Activated CD4-positive, alpha-beta T cell treated with anti-CD3 and anti-CD28 coated beads for 36 hours (primary cell): ENCODE measurements at regions of chr19 and their contacts with region 1.

Region 1: DNA sequence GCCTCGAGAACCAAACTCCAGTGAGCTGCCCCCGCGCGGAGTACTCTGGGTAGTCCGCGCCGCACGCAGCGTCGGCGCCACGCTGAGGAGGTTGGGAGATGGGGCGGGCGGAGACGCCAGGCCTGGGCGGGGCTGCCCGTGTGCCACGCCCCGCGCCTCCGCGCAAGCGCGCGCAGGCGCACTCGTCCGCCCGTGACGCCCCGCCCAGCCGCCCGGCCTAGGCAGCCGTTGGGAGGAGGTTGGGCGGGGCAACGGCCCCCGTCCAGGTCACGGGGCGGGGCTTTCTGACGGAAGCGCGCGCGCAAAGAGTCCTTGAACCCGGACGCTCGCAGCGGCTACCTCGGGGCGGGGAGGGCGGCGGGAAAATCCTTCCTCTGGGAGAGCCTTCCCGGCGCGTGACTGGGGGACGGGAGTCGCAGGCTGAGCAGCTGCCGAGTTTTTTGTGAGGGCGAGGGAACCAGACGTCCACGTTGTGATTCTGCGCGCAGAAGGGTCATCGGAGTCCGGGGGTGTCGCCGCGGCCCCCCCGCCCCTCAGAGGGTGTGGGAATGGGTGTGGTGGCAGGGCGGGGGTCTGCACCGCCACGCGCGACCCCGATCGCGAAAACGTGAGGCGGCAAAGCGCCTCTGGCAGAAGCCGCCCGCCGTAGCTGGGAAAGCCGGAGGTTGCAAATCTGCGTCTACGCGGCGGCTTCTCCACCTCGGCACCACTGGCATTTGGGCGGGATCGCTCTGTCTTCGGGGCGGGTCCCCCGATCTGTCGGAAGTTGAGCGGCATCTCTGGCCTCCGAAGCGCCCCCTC is at the start of gene MED26:
- DNase-seq: peak; percentile 98
- ATAC-seq: peak; percentile 92
- H3K4me3 Mint-ChIP-seq: peak within 1 kb of the TSS; percentile 87
- H3K27ac Mint-ChIP-seq: peak within 1 kb of the TSS; percentile 100
- H3K4me1 Mint-ChIP-seq: peaks cover 39% of the 10 kb centered on the region
- H3K27me3 Mint-ChIP-seq: no peaks in the 10 kb centered on the region
- total RNA-seq, gene MED26: 13.6 to 14.5 TPM

Region 2: GRCh38 chr19:16197622-16198369 is 430.6 kb before region 1 on chr19 and contains the start of gene AP1M1:
- CTCF ChIA-PET with region 1: no interaction called
- POLR2A ChIA-PET with region 1: no interaction called
- intact Hi-C with region 1: loop called in 1 of 2 experiments (anchors 1 kb)
- DNase-seq: peak; percentile 99
- ATAC-seq: peak; percentile 95
- H3K4me3 Mint-ChIP-seq: peak within 1 kb of the TSS; percentile 83
- H3K27ac Mint-ChIP-seq: peak within 1 kb of the TSS; percentile 96
- H3K4me1 Mint-ChIP-seq: peaks cover 33% of the 10 kb centered on the region
- H3K27me3 Mint-ChIP-seq: no peaks in the 10 kb centered on the region
- total RNA-seq, gene AP1M1: 61.8 to 92.0 TPM

Region 3: GRCh38 chr19:16470911-16471811 is 157.2 kb before region 1 on chr19:
- CTCF ChIA-PET with region 1: no interaction called
- POLR2A ChIA-PET with region 1: no interaction called
- intact Hi-C with region 1: loop called in 1 of 2 experiments (anchors 1 kb)
- DNase-seq: peak; percentile 60
- ATAC-seq: peak; percentile 20
- H3K4me3 Mint-ChIP-seq: peak overlapping the region; percentile 85
- H3K27ac Mint-ChIP-seq: peak overlapping the region; percentile 72
- H3K4me1 Mint-ChIP-seq: peaks cover 37% of the 10 kb centered on the region
- H3K27me3 Mint-ChIP-seq: peaks cover 2% of the 10 kb centered on the region

Region 4: DNA sequence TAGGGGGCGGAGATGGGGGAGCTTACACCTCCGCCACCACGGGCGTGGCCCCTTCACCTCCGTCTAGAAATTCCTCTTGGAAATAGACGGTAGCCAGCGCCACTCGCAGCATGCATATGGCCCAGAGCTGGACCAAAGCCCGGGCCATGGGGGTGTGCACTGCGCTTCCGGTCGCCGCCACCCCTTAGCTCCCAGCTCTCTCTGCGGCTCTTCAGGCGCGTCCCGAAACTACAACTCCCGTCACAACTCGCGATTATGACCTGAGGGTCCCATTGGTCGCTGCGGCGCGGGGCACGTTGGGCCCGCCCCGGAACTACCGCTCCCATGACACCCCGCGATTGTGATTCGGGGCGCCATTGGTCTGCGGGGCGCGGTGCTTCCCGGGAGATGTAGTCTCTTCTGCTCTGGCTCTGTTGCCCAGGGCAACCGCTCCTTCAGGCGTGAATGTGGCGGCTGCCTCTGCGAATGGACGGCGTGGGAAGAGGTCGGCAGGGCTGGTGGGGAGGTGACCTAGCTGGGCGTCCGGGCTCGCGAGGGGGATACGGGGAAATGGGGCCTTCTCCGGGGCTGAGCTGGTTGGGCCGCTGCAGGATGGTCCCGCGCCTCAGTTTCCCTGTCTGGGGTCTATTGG is 132.3 kb before region 1 on chr19 and contains the starts of genes C19orf44 and CALR3:
- CTCF ChIA-PET with region 1: no interaction called
- POLR2A ChIA-PET with region 1: no interaction called
- intact Hi-C with region 1: loop called (anchors 1 kb)
- DNase-seq: peak; percentile 99
- ATAC-seq: peak; percentile 99
- H3K4me3 Mint-ChIP-seq: peak within 1 kb of the TSS; percentile 89
- H3K27ac Mint-ChIP-seq: peak within 1 kb of the TSS; percentile 79
- H3K4me1 Mint-ChIP-seq: peaks cover 13% of the 10 kb centered on the region
- H3K27me3 Mint-ChIP-seq: no peaks in the 10 kb centered on the region
- total RNA-seq, gene C19orf44: 2.9 to 4.0 TPM
- total RNA-seq, gene CALR3: not detected

Region 5: GRCh38 chr19:16584248-16585141 is 43.9 kb before region 1 on chr19:
- CTCF ChIA-PET with region 1: interaction called, 4 read pairs
- POLR2A ChIA-PET with region 1: interaction called, 28 read pairs
- intact Hi-C with region 1: loop called (anchors 1 kb)
- DNase-seq: peak; percentile 94
- ATAC-seq: peak; percentile 79
- H3K4me3 Mint-ChIP-seq: peak overlapping the region; percentile 79
- H3K27ac Mint-ChIP-seq: peak overlapping the region; percentile 95
- H3K4me1 Mint-ChIP-seq: peaks cover 76% of the 10 kb centered on the region
- H3K27me3 Mint-ChIP-seq: no peaks in the 10 kb centered on the region

Region 6: DNA sequence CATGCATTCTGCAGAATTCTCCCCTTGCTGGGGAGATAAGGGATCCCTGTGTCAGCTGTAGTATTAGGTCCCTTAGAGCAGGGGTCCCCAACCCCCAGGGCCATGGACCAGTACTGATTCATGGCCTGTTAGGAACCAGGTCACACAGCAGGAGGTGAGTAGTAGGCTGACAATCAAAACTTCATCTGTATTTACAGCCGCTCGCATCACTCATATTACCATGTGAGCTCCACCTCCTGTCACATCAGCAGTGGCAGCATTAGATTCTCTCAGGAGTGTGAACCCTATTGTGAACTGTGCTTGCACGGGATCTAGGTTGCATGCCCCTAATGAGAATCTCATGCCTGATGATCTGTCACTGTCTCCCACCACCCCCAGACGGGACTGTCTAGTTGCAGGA is 360.3 kb after region 1 on chr19:
- CTCF ChIA-PET with region 1: no interaction called
- POLR2A ChIA-PET with region 1: no interaction called
- intact Hi-C with region 1: no loop called
- DNase-seq: no peak
- ATAC-seq: no peak
- H3K4me3 Mint-ChIP-seq: no peak overlapping the region
- H3K27ac Mint-ChIP-seq: no peak overlapping the region
- H3K4me1 Mint-ChIP-seq: no peaks in the 10 kb centered on the region
- H3K27me3 Mint-ChIP-seq: peaks cover 13% of the 10 kb centered on the region